HepG2 (cell line): ENCODE measurements at regions of chr3 and their contacts with region 1.

Region 1: DNA sequence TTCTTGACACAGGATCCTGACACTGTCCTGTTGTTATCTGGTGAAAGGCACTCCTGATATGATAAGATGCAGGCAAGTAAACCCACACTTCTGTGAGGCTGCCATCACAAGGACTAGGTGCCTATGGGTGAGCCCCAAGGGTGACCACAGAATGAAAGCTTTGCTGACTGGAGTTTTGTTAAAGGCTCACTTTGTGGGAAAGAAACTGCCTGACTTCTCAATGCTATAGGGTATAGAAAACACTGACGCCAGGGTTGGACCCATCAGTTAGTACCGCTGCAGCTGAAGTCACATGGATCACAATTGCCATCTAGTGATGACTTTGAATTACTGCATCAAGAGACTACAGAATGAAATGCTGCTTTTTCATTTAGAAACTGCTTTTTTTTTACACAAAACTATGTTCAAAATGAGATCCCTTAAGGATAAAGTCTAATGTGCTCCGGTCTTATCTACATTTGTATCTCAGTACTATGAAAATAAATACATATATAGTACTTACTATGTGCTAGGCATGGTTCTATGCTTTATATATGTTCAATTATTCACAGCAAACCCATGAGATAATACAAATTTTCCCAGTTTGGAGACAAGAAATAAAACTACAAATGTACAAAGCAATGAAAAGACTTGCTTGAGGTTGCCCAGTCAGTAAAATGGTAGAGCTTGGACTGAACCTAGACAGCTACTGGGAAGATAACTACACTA is 64.2 kb upstream of the CMSS1 start:
- DNase-seq: peak; percentile 28
- ATAC-seq: peak; percentile 88
- H3K4me3 ChIP-seq: no peak overlapping the region
- H3K27ac ChIP-seq: no peak overlapping the region
- H3K4me1 ChIP-seq: no peaks in the 10 kb centered on the region
- H3K27me3 ChIP-seq: no peaks in the 10 kb centered on the region
- CTCF ChIP-seq: peak; percentile 78
- EP300 ChIP-seq: no peak
- POLR2A ChIP-seq: no peak
- RAD21 ChIP-seq: no peak

Region 2: GRCh38 chr3:99023590-99024192 is 729.7 kb before region 1 on chr3:
- CTCF ChIA-PET with region 1: interaction called, 8 read pairs
- POLR2A ChIA-PET with region 1: no interaction called
- in situ Hi-C with region 1: no loop called
- intact Hi-C with region 1: loop called (anchors 1 kb)
- DNase-seq: peak; percentile 3
- ATAC-seq: no peak
- H3K4me3 ChIP-seq: no peak overlapping the region
- H3K27ac ChIP-seq: no peak overlapping the region
- H3K4me1 ChIP-seq: no peaks in the 10 kb centered on the region
- H3K27me3 ChIP-seq: no peaks in the 10 kb centered on the region
- CTCF ChIP-seq: peak; percentile 63
- EP300 ChIP-seq: no peak
- POLR2A ChIP-seq: no peak
- RAD21 ChIP-seq: no peak

Region 3: DNA sequence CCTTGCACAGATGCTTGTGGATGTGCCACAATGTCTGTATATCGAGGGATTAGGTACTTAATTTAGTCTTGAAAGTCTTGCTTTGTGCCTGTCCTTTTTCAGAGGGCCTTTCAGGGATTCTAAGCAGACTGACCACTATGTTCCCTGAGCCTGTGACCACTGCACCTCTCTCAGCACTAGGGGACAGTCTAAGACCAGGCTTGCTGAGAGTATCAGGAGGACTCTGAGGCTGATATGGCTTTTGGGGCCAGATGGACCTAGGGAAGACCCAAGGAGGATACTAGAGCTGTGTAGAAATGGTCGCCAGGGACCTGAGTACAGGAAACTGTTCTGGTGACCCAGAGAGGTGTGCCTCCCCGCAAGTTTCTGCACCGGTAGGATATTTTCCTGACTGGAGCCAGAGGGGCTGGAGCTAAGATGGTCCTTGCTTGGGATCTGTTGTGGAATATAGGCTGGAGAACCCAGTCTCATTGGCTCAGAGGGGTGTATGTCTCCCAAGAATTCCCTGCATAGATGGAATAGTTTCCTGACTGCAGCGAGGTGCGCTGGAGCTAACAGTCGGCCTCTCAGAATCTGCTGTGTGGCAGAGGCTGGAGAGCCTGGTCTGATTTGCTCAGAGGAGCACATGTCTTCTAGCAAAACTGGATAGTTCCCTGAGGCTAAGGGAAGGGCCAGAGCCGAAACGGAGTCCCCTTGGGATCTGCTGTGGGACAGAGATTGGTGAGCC is 638.7 kb before region 1 on chr3:
- CTCF ChIA-PET with region 1: no interaction called
- POLR2A ChIA-PET with region 1: no interaction called
- in situ Hi-C with region 1: no loop called
- intact Hi-C with region 1: loop called (anchors 5 kb)
- DNase-seq: peak; percentile 20
- ATAC-seq: peak; percentile 98
- H3K4me3 ChIP-seq: no peak overlapping the region
- H3K27ac ChIP-seq: no peak overlapping the region
- H3K4me1 ChIP-seq: no peaks in the 10 kb centered on the region
- H3K27me3 ChIP-seq: no peaks in the 10 kb centered on the region
- CTCF ChIP-seq: peak; percentile 69
- EP300 ChIP-seq: no peak
- POLR2A ChIP-seq: no peak
- RAD21 ChIP-seq: no peak; the same call in none of the 2 replicates

Region 4: DNA sequence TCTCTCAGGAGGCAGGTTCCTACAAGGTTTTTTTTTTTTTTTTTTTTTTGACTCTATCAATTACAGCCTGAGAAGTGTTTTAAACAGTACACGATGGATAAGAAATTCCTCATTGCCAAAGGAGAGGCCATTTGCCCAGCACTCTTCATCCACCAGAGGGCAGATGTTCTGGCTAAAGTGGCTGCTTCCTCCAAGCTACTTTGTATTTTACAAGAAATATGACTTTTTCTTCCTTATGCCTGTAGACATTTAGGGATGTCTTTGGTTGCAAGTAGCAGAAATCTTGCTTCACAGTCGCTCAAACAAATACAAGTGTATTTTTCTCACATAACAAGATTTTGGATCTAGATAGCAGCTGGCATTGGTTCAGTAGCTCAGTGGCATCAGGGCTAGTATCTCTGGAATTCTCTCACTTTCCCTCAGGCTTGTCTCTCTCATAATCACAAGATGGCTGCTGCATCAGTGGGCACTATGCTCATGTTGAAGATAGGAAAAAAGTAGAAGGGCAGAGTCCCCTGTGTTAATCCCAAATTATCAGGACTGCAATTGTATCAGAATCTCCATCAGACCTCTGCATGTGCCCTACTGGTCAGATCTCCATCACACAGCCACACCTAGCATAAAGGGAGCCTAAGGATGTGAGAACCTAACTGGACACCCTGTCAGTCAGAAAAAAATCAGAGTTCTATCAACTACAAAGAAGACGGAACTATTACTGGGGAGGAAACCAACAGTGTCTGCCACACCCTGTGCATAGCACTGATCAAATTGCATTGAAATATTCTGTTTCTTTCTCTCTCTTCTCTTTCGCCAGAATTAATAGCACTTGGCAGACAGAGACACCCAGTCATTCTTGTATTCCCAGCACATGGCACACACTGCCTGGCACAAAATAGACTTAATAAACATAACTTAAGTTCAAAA is 253.9 kb before region 1 on chr3:
- CTCF ChIA-PET with region 1: interaction called, 10 read pairs
- POLR2A ChIA-PET with region 1: no interaction called
- in situ Hi-C with region 1: loop called (anchors 5 kb)
- intact Hi-C with region 1: no loop called
- DNase-seq: peak; percentile 6
- ATAC-seq: peak; percentile 88
- H3K4me3 ChIP-seq: no peak overlapping the region
- H3K27ac ChIP-seq: no peak overlapping the region
- H3K4me1 ChIP-seq: no peaks in the 10 kb centered on the region
- H3K27me3 ChIP-seq: no peaks in the 10 kb centered on the region
- CTCF ChIP-seq: peak; percentile 60
- EP300 ChIP-seq: no peak
- POLR2A ChIP-seq: no peak
- RAD21 ChIP-seq: no peak

Region 5: DNA sequence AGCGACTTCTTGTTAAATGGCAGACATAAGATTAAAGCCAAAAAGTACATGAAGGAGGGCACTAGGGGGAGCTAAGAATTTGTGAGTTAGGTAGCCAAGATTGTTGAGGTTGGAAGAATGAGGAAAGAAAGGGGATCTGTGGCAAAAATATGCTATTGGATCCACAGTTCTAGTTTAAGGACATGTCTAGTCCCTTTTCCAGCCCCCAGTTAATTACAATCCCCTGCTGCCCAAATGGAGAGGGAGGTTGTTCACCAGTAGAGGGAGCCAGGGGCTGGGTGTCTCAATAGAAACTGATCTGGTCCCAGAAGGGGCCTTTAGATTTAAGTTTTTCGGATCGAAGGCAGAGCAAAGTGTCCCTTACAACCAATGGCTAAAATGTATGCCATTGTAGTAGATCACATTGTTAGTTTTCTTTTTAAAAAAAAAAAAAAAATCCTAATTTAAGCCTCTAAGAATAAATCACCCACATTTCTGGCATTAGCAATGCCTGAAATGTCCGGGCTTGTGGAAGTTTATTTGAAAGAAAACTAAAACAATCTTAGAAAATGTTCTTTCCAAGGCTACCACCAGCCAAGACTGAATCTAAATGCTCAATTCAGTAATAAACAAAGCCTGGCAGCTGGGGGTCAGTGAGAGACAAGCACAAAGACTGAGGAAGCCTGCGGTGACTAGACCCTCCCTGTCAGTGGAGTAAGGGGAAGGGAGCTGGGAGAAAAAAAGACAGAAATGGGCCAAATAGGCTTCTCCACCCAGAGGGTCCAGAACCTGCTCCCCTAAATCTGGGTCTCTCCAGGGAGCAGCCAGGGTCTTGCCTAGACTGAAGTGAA is 107.9 kb before region 1 on chr3:
- CTCF ChIA-PET with region 1: interaction called, 10 read pairs
- POLR2A ChIA-PET with region 1: no interaction called
- in situ Hi-C with region 1: loop called (anchors 10 kb)
- intact Hi-C with region 1: loop called (anchors 1 kb)
- DNase-seq: peak; percentile 16
- ATAC-seq: peak; percentile 72
- H3K4me3 ChIP-seq: no peak overlapping the region
- H3K27ac ChIP-seq: no peak overlapping the region
- H3K4me1 ChIP-seq: no peaks in the 10 kb centered on the region
- H3K27me3 ChIP-seq: no peaks in the 10 kb centered on the region; a peak in 1 of 5 replicates
- CTCF ChIP-seq: peak; percentile 57
- EP300 ChIP-seq: no peak
- POLR2A ChIP-seq: no peak
- RAD21 ChIP-seq: no peak

Region 6: GRCh38 chr3:99765042-99765942 is 11.9 kb after region 1 on chr3:
- CTCF ChIA-PET with region 1: no interaction called
- POLR2A ChIA-PET with region 1: no interaction called
- in situ Hi-C with region 1: no loop called
- intact Hi-C with region 1: no loop called
- DNase-seq: no peak
- ATAC-seq: no peak
- H3K4me3 ChIP-seq: no peak overlapping the region
- H3K27ac ChIP-seq: no peak overlapping the region
- H3K4me1 ChIP-seq: no peaks in the 10 kb centered on the region
- H3K27me3 ChIP-seq: no peaks in the 10 kb centered on the region; a peak in 1 of 5 replicates
- CTCF ChIP-seq: no peak
- EP300 ChIP-seq: no peak
- POLR2A ChIP-seq: no peak
- RAD21 ChIP-seq: no peak